Panc1 (cell line): ENCODE measurements at regions of chrX and their contacts with region 1.

Region 1: GRCh38 chrX:88613338-88613737 is 133.7 kb upstream of the CPXCR1 start:
- DNase-seq: no peak
- ATAC-seq: peak; percentile 70; the same call in 1 of the 2 replicates
- H3K4me3 ChIP-seq: peak overlapping the region in 1 of 2 experiments; percentile 32; a peak in 2 of 4 replicates
- H3K27ac ChIP-seq: no peak overlapping the region
- H3K4me1 ChIP-seq: no peaks in the 10 kb centered on the region
- H3K27me3 ChIP-seq: no peaks in the 10 kb centered on the region
- CTCF ChIP-seq: peak; percentile 53; the same call in 1 of the 2 replicates

Region 2: GRCh38 chrX:88135735-88136134 is 477.6 kb before region 1 on chrX:
- CTCF ChIA-PET with region 1: no interaction called
- POLR2A ChIA-PET with region 1: no interaction called
- in situ Hi-C with region 1: no loop called
- intact Hi-C with region 1: loop called (anchors 2 kb)
- DNase-seq: no peak
- ATAC-seq: no peak
- H3K4me3 ChIP-seq: no peak overlapping the region
- H3K27ac ChIP-seq: no peak overlapping the region
- H3K4me1 ChIP-seq: no peaks in the 10 kb centered on the region
- H3K27me3 ChIP-seq: no peaks in the 10 kb centered on the region
- CTCF ChIP-seq: peak; percentile 27; the same call in 1 of the 2 replicates

Region 3: DNA sequence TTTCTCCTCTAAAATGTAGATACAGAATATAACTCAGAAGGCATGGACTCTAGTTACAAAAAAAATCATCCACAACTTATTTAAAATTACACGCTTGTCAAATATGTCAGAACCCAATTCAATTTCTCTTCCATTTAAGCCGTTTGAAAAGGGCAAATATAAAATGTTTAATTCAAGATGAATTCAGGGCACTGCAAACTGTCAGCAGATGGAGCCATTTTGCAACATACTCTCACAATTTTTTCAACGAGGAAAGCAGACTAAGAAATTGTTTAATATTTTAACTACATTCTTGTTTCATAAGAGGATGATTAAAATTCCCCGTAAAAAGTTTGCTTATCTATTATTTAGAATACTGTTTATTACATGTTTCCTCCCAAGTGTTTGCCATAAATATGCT is 187.6 kb before region 1 on chrX:
- CTCF ChIA-PET with region 1: no interaction called
- POLR2A ChIA-PET with region 1: no interaction called
- in situ Hi-C with region 1: no loop called
- intact Hi-C with region 1: loop called (anchors 2 kb)
- DNase-seq: no peak
- ATAC-seq: no peak
- H3K4me3 ChIP-seq: peak overlapping the region in 1 of 2 experiments; percentile 26; a peak in 1 of 4 replicates
- H3K27ac ChIP-seq: no peak overlapping the region
- H3K4me1 ChIP-seq: no peaks in the 10 kb centered on the region
- H3K27me3 ChIP-seq: no peaks in the 10 kb centered on the region
- CTCF ChIP-seq: peak; percentile 44; the same call in 1 of the 2 replicates

Region 4: GRCh38 chrX:88526385-88526784 is 87.0 kb before region 1 on chrX:
- CTCF ChIA-PET with region 1: no interaction called
- POLR2A ChIA-PET with region 1: no interaction called
- in situ Hi-C with region 1: no loop called
- intact Hi-C with region 1: no loop called
- DNase-seq: no peak
- ATAC-seq: no peak
- H3K4me3 ChIP-seq: no peak overlapping the region
- H3K27ac ChIP-seq: no peak overlapping the region
- H3K4me1 ChIP-seq: no peaks in the 10 kb centered on the region
- H3K27me3 ChIP-seq: no peaks in the 10 kb centered on the region
- CTCF ChIP-seq: no peak

Region 5: GRCh38 chrX:88735835-88736234 is 122.5 kb after region 1 on chrX:
- CTCF ChIA-PET with region 1: no interaction called
- POLR2A ChIA-PET with region 1: no interaction called
- in situ Hi-C with region 1: no loop called
- intact Hi-C with region 1: no loop called
- DNase-seq: no peak
- ATAC-seq: no peak
- H3K4me3 ChIP-seq: no peak overlapping the region
- H3K27ac ChIP-seq: no peak overlapping the region
- H3K4me1 ChIP-seq: no peaks in the 10 kb centered on the region
- H3K27me3 ChIP-seq: no peaks in the 10 kb centered on the region
- CTCF ChIP-seq: no peak